Psoas muscle (tissue), 8 donors: ENCODE measurements at regions of chr9 and their contacts with region 1.

Region 1: GRCh38 chr9:112268413-112268812 is 65.0 kb downstream of the PTBP3 start:
- DNase-seq: no peak
- ATAC-seq: no peak
- H3K4me3 ChIP-seq: no peak overlapping the region
- H3K27ac ChIP-seq: no peak overlapping the region
- H3K4me1 ChIP-seq: no peaks in the 10 kb centered on the region
- H3K27me3 ChIP-seq: no peaks in the 10 kb centered on the region
- CTCF ChIP-seq: no peak

Region 2: GRCh38 chr9:112315331-112316257 is 47.2 kb after region 1 on chr9:
- intact Hi-C with region 1: loop called in 1 of 2 experiments (anchors 10 kb)
- DNase-seq: no peak
- ATAC-seq: no peak
- H3K4me3 ChIP-seq: no peak overlapping the region
- H3K27ac ChIP-seq: no peak overlapping the region
- H3K4me1 ChIP-seq: no peaks in the 10 kb centered on the region
- H3K27me3 ChIP-seq: no peaks in the 10 kb centered on the region
- CTCF ChIP-seq: no peak

Region 3: DNA sequence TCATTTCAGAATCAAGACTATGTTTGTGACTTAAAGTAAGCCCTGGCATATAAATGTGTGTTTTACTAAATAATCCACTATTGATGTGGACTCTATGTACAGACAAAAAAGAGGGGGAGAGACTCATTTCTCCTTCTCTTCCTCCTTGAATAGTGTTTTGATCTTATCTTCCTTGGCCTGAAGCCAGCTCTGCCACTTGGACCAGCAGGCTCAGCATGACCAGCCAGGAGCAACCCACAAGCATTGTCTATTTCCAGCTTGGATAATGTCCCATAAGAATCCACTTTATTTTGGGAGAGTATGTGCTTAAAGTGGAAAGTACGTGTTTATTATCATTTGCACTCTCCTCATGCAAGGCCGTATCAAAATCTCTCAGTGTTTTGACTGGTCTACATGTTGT is 646.1 kb after region 1 on chr9:
- intact Hi-C with region 1: no loop called
- DNase-seq: no peak
- ATAC-seq: no peak
- H3K4me3 ChIP-seq: no peak overlapping the region
- H3K27ac ChIP-seq: no peak overlapping the region
- H3K4me1 ChIP-seq: no peaks in the 10 kb centered on the region
- H3K27me3 ChIP-seq: peaks cover 0 to 3% (median 0%) of the 10 kb centered on the region in 3 donors
- CTCF ChIP-seq: no peak